ENCODE measurements at regions of chr6 and their contacts with region 1.

Region 1: DNA sequence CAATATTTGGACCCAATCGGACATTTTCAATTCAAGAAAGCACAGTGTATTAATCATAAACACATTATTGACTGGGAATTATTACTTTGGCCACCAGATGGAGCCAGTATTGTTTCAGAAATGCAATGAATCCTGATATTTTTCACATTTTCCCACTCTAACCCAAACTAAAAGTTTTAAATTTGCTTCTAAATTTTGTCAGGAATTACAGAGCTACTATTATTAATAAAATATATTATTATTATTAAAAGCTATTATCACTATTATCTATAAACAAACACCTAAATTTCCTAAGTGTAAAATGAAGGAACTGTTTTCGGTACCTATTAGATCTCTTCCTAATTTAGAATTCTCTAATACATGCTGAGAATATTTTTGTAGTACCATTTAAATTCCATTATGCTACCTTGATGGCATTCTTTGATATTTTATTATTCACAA is 245.3 kb downstream of the OGFRL1 start:
- DNase-seq: peak; percentile 42
- H3K4me3 Mint-ChIP-seq: no peak overlapping the region
- H3K27ac Mint-ChIP-seq: no peak overlapping the region
- H3K4me1 Mint-ChIP-seq: peaks cover 6% of the 10 kb centered on the region
- H3K27me3 Mint-ChIP-seq: peaks cover 36% of the 10 kb centered on the region
- CTCF ChIP-seq: peak; percentile 62

Region 2: DNA sequence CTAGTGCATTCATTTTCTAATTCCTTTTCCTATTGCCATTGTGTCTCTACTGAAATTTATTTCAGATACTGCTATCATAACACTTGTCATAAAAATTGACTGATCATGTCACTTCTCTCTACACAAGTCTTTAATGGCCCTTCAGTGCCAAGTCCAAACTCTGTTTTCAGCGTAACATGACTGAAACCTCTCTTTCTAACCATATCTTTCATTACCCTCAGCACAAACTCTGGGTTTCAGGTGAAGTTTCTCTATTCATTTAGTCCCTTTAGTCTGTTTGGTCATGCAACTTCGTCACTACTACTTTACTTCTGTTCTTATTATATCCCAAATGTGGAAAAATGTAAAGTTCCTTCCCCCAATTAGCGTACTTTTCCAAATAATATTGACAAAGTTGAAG is 10.4 kb before region 1 on chr6:
- CTCF ChIA-PET with region 1: interaction called, 18 read pairs
- POLR2A ChIA-PET with region 1: no interaction called
- intact Hi-C with region 1: no loop called
- DNase-seq: no peak
- H3K4me3 Mint-ChIP-seq: no peak overlapping the region
- H3K27ac Mint-ChIP-seq: no peak overlapping the region
- H3K4me1 Mint-ChIP-seq: no peaks in the 10 kb centered on the region
- H3K27me3 Mint-ChIP-seq: peaks cover 77% of the 10 kb centered on the region
- CTCF ChIP-seq: no peak

Region 3: DNA sequence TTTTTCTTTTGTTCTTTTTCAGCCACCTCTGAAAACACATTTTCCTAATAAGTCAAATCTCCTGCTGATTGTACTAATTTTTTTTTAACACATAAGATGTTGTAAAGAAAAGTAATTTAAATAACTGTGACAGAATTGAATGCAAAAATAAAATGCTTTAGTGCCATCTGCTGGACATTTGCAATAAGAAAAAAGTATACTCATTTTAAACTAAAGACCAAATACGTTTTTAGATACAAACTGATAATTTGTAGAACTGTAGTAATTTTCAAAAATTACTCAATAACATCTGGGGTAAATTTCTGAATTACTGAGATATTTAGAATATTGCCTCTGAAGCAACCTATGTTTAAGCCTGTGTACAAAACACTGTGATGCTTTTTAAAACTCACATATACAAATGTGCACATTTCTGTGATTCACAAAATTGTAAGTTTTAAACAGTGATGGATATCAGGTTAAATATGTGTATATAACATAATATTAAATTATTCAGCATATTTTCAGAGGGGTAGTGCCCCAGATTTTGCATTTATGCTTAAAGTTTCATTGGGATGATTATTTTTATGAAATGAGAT is 551.1 kb after region 1 on chr6:
- CTCF ChIA-PET with region 1: interaction called, 11 read pairs
- POLR2A ChIA-PET with region 1: interaction called, 5 read pairs
- intact Hi-C with region 1: loop called (anchors 1 kb)
- DNase-seq: peak; percentile 14
- H3K4me3 Mint-ChIP-seq: no peak overlapping the region
- H3K27ac Mint-ChIP-seq: no peak overlapping the region
- H3K4me1 Mint-ChIP-seq: no peaks in the 10 kb centered on the region
- H3K27me3 Mint-ChIP-seq: peaks cover 67% of the 10 kb centered on the region
- CTCF ChIP-seq: peak; percentile 42

Region 4: GRCh38 chr6:72246926-72247325 is 713.0 kb after region 1 on chr6:
- CTCF ChIA-PET with region 1: no interaction called
- POLR2A ChIA-PET with region 1: no interaction called
- intact Hi-C with region 1: no loop called
- DNase-seq: no peak
- H3K4me3 Mint-ChIP-seq: no peak overlapping the region
- H3K27ac Mint-ChIP-seq: no peak overlapping the region
- H3K4me1 Mint-ChIP-seq: no peaks in the 10 kb centered on the region
- H3K27me3 Mint-ChIP-seq: peaks cover 51% of the 10 kb centered on the region
- CTCF ChIP-seq: no peak

Region 5: DNA sequence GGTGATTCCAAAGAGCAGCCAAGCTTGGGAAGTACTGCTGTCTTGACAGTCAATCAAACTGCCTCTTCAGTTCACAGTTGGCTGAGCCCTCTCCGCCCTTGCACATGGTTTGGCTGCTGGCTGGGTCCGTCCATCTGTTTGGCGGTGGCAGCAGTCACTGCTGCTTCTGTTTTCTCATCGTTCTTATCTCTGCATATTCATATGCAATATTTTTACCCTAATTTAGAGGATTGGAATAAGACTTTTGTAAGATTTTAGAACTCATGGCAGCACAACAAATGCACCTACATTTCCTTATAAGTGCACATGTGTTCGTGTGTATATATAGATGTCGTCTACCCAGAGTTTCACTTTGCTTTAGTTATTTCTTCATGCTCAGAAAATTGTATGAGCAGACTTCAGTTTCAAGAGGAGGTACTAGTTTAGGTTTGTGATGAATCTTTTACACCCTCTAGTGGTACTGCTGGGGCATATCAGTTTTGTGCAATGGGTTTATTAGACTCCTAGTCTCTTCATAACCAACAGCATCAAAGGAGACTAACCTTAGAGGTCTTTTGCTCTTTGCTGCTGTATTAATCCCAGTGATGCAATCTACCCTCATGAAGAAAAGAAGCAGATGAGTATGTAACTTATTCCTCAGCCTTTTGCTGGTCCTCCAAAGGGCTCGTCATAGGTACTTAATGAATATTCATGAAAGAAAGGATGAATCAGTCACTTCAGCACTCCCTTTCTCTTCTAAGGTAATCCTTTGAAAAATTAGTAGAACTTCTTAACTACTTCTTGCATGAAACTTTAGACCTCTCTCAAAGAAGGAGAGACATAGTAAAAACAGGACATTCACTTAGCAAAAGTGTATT is 1647.0 kb after region 1 on chr6:
- CTCF ChIA-PET with region 1: no interaction called
- POLR2A ChIA-PET with region 1: no interaction called
- intact Hi-C with region 1: loop called (anchors 10 kb)
- DNase-seq: peak; percentile 70
- H3K4me3 Mint-ChIP-seq: peak overlapping the region; percentile 51
- H3K27ac Mint-ChIP-seq: no peak overlapping the region
- H3K4me1 Mint-ChIP-seq: no peaks in the 10 kb centered on the region
- H3K27me3 Mint-ChIP-seq: no peaks in the 10 kb centered on the region
- CTCF ChIP-seq: peak; percentile 81

Measured in MCF 10A (cell line).